ENCODE measurements at regions of chr3 and their contacts with region 1.

Region 1: GRCh38 chr3:151168269-151169094 is 34.5 kb downstream of the GPR171 start:
- DNase-seq: peak; percentile 90
- ATAC-seq: peak; percentile 68
- H3K4me3 Mint-ChIP-seq: no peak overlapping the region
- H3K27ac Mint-ChIP-seq: peak overlapping the region; percentile 49
- H3K4me1 Mint-ChIP-seq: peaks cover 44% of the 10 kb centered on the region
- H3K27me3 Mint-ChIP-seq: no peaks in the 10 kb centered on the region

Region 2: DNA sequence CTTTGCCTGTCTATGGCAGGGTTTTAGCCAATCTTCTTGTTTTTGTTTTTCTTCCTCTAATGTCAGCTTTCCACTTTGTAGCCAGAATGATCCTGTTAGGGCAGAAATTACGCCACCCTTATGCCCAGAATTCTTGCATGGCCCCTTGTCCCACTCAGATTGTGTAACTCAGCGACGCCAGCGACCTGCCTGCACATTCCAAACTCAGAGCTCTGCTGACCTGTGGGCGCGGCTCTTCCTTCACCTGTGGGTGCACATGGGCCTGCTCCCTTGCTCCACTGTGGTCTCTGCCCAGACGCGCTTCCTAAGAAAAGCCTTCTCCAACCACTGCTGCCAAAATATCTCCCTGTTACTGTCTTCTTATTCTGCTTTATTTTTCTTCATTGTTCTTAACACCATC is 38.0 kb before region 1 on chr3:
- CTCF ChIA-PET with region 1: no interaction called
- DNase-seq: no peak
- ATAC-seq: no peak
- H3K4me3 Mint-ChIP-seq: no peak overlapping the region
- H3K27ac Mint-ChIP-seq: no peak overlapping the region
- H3K4me1 Mint-ChIP-seq: peaks cover 15% of the 10 kb centered on the region
- H3K27me3 Mint-ChIP-seq: peaks cover 15% of the 10 kb centered on the region

Region 3: DNA sequence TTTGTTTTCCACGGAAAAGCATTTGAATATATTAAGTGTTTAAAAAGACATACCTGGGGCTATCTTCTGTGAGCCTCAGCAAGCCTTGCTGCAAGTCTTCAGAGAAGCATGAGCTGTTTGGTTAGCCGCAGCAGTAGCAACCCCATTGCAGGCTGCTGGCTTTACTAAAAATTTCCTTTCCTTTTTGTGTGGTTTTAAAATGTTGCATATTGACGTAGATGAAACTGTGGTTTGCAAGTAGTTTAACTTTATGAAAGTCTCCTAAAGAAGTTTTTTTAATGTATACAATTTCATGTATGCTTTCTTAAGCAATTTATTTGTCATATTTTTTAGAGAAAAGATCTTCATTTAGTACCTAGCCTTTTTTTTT is 34.6 kb after region 1 on chr3 and contains the start of gene GPR171:
- CTCF ChIA-PET with region 1: interaction called, 63 read pairs
- DNase-seq: peak; percentile 89
- ATAC-seq: peak; percentile 60
- H3K4me3 Mint-ChIP-seq: peak within 1 kb of the TSS; percentile 98
- H3K27ac Mint-ChIP-seq: peak within 1 kb of the TSS; percentile 97
- H3K4me1 Mint-ChIP-seq: peaks cover 67% of the 10 kb centered on the region
- H3K27me3 Mint-ChIP-seq: no peaks in the 10 kb centered on the region
- total RNA-seq, gene GPR171: 153 to 218 TPM

Region 4: GRCh38 chr3:151227807-151228665 is 59.6 kb after region 1 on chr3:
- CTCF ChIA-PET with region 1: interaction called, 92 read pairs
- DNase-seq: peak; percentile 89
- ATAC-seq: peak; percentile 89
- H3K4me3 Mint-ChIP-seq: peak overlapping the region; percentile 34
- H3K27ac Mint-ChIP-seq: peak overlapping the region; percentile 77
- H3K4me1 Mint-ChIP-seq: peaks cover 58% of the 10 kb centered on the region
- H3K27me3 Mint-ChIP-seq: no peaks in the 10 kb centered on the region

Region 5: GRCh38 chr3:151282921-151283320 is 114.4 kb after region 1 on chr3:
- CTCF ChIA-PET with region 1: interaction called, 118 read pairs
- DNase-seq: no peak
- ATAC-seq: peak; percentile 52
- H3K4me3 Mint-ChIP-seq: no peak overlapping the region
- H3K27ac Mint-ChIP-seq: peak overlapping the region; percentile 74
- H3K4me1 Mint-ChIP-seq: peaks cover 58% of the 10 kb centered on the region
- H3K27me3 Mint-ChIP-seq: no peaks in the 10 kb centered on the region